Activated B cell treated with CpG ODN at 0.5 μM for 24 hours (primary cell): ENCODE measurements at regions of chr6 and their contacts with region 1.

Region 1: DNA sequence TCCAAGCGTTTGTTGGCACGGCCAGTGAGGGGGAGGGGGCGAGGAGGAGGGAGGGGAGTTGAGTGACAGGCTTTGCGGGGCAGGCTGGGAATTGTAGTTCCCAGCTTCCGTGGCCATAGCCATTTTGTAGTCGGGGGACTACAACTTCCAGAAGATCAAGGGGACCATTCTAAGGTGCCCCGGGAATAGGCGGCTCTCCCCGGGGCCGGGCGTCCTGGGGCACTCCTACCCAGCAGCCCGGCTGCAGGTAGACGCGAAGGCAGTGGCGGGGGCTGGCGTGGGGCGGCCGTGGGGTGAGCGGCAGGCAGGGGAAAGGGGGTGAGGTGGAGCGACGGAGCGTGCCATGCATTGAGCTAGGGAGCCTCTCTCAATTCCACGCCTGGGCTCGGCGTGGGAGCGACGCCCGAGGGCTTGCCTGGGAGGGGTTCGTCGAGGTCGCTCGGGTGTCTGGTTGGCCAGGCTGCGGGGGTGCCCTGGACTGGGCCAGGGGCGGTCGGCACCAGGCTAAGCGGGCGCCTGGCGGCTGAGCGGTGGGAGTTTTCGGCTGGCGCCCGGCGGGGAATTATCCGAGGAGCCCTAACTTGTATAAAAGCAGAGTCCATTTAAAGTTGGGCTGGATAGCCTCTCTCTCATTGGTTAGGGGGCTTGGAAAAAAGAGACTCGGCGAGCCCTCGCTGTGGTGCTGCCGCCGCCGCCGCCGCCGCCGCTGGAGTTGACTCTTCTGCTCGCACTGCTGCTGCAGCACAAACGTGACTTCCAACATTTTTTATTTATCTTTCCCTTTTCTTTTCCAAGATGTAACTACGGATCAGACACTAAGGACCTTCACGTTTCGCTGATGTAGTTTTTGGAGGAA is at the start of gene JARID2:
- DNase-seq: peak; percentile 94
- ATAC-seq: peak; percentile 61
- H3K4me3 Mint-ChIP-seq: peak within 1 kb of the TSS; percentile 100
- H3K27ac Mint-ChIP-seq: peak within 1 kb of the TSS; percentile 96
- H3K4me1 Mint-ChIP-seq: peaks cover 32% of the 10 kb centered on the region
- H3K27me3 Mint-ChIP-seq: no peaks in the 10 kb centered on the region
- CTCF ChIP-seq: no peak
- total RNA-seq, gene JARID2: 27.0 and 28.5 TPM in 2 replicates

Region 2: DNA sequence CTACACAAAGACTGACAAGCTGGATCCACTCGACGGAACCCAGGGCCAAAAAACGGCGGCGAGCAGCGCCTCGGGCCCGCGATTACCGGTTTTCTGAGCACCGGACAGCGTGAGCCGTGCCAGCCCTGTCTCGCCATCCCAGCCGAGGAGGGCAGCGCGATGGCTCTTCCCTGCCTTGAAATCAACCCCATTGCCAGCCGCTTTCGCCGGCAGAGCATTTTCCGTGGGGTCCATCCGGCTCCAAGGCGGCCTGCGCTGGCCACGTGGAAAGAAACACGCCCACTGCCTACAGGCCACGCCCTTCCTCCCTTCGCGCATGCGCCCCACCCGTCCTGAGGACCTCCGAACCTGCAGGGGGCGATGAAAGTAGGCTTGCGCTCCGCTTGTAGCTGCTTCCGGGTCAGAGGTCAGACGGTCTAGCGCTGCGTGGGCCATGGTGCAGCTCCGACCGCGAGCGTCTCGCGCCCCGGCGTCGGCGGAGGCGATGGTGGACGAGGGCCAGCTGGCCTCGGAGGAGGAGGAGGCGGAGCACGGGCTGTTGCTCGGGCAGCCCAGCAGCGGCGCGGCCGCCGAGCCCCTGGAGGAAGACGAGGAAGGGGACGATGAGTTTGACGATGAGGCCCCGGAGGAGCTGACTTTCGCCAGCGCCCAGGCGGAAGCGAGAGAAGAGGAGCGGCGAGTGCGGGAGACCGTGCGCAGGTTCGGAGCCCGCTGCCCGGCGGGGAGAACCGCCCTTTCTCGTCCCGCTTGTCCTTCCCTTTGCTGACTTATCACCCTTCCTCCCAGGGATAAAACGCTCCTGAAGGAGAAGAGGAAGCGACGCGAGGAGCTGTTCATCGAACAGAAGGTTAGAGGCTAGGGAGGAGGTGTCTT is 1630.4 kb before region 1 on chr6 and contains the start of gene NOL7:
- CTCF ChIA-PET with region 1: no interaction called
- POLR2A ChIA-PET with region 1: no interaction called
- intact Hi-C with region 1: loop called (anchors 5 kb)
- DNase-seq: peak; percentile 98
- ATAC-seq: peak; percentile 91
- H3K4me3 Mint-ChIP-seq: peak within 1 kb of the TSS; percentile 98
- H3K27ac Mint-ChIP-seq: peak within 1 kb of the TSS; percentile 94
- H3K4me1 Mint-ChIP-seq: peaks cover 43% of the 10 kb centered on the region
- H3K27me3 Mint-ChIP-seq: no peaks in the 10 kb centered on the region
- CTCF ChIP-seq: peak; percentile 30
- total RNA-seq, gene NOL7: 67.5 and 74.4 TPM in 2 replicates

Region 3: GRCh38 chr6:14095437-14095836 is 1150.2 kb before region 1 on chr6:
- CTCF ChIA-PET with region 1: no interaction called
- POLR2A ChIA-PET with region 1: no interaction called
- intact Hi-C with region 1: loop called (anchors 5 kb)
- DNase-seq: peak; percentile 72
- ATAC-seq: peak; percentile 73
- H3K4me3 Mint-ChIP-seq: peak overlapping the region; percentile 85
- H3K27ac Mint-ChIP-seq: peak overlapping the region; percentile 100
- H3K4me1 Mint-ChIP-seq: peaks cover 96% of the 10 kb centered on the region
- H3K27me3 Mint-ChIP-seq: no peaks in the 10 kb centered on the region
- CTCF ChIP-seq: no peak

Region 4: DNA sequence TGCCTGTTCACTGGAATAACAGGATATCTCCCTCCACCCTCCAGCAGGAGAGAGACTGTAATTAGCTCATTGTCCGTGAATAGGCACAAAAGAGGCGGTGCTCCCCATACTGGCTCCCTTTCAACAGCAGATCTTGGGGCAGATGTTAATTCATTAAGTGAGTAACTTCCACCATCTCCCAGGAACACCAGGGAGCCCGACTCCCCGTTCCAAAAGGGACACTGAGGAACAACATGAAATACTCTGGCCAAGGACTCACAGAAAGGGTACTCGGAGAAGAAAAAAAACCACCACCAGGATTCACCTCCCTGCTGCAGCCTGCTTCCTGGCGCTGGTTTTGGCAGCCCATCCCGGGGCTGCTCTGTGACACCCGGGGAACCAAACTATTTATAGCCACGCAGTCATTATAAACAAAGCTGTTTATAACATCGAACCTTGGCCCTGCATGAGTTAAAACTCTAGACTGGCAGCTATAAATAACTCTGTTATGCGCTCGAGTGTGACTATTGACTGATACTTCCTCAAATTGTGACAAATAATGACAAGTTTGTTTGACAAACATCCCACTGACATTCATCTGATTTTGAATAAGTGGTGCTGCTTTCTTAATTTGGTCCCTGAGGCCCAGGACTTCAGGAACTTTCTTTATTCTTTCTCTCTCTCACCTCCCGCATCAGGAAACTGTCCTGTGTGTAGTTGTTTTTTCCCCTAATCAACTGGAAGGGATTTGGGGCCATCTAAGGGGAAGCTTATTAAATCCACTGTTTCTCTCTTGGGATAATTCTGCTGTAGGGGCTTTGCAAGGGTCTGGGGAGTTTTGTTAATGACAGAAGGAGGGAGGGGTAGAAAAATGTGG is 606.5 kb before region 1 on chr6:
- CTCF ChIA-PET with region 1: no interaction called
- POLR2A ChIA-PET with region 1: no interaction called
- intact Hi-C with region 1: loop called (anchors 10 kb)
- DNase-seq: no peak
- ATAC-seq: peak; percentile 60
- H3K4me3 Mint-ChIP-seq: peak overlapping the region; percentile 86
- H3K27ac Mint-ChIP-seq: peak overlapping the region; percentile 96
- H3K4me1 Mint-ChIP-seq: peaks cover 82% of the 10 kb centered on the region
- H3K27me3 Mint-ChIP-seq: no peaks in the 10 kb centered on the region
- CTCF ChIP-seq: no peak

Region 5: DNA sequence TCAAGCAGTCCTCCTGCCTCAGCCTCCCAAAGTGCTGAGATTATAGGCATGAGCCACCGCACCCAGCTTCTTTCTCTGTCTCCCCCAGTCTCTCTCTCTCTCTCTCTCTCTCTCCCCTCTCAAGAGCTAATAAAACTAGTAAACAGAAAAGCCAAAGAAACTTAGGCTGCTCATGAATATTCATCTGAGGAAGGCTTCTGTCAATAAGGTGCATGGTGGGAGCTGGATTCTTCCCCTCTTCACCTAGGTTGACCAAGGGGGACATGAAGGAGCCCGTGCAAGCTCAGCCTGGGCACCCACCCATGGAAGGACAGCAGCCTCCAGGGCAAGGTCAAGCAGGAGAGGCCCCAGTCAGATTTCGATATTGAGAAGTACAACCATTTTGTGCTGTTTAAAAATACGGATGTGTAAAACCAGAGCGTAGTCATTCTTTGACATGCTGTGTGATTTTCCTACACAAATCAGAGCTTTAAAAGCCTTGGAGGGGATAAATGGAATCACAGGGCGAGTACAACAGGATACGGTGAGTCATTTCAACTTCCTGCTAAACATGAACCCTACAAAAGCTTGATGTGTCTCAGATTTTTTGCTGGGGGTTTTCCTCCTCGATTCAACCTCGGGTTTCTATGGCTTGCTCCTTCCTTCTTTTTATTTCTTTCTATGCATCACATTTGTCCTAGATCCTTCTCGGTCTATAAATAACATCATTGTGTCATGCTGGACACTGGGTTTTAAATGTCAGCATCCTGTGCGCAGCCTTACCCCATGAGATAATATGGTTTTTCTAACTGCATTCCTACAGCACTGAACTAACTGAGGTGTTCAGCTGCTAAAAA is 368.6 kb before region 1 on chr6:
- CTCF ChIA-PET with region 1: no interaction called
- POLR2A ChIA-PET with region 1: interaction called, 6 read pairs
- intact Hi-C with region 1: loop called (anchors 5 kb)
- DNase-seq: no peak
- ATAC-seq: peak; percentile 86
- H3K4me3 Mint-ChIP-seq: peak overlapping the region; percentile 53
- H3K27ac Mint-ChIP-seq: peak overlapping the region; percentile 82
- H3K4me1 Mint-ChIP-seq: peaks cover 42% of the 10 kb centered on the region
- H3K27me3 Mint-ChIP-seq: no peaks in the 10 kb centered on the region
- CTCF ChIP-seq: no peak

Region 6: DNA sequence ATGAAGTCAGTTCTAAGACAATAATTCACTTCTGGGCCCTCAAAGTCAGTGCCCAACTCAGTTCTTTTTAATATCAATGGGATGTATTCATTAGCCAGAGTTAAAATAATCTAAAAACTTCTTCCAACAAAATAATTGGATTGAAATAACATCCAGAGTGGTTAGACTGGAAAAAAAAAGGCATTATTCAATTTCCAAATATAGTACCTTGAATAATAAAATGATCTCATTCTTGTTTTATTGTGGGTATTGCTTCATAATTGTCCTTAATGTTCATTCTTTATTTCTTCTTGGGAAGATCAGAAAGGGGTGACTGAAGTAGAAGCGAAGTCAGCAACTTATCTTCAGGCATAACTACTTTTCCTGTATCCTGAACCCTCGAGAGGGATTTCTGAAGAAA is 84.8 kb before region 1 on chr6:
- CTCF ChIA-PET with region 1: no interaction called
- POLR2A ChIA-PET with region 1: no interaction called
- intact Hi-C with region 1: no loop called
- DNase-seq: no peak
- ATAC-seq: no peak
- H3K4me3 Mint-ChIP-seq: no peak overlapping the region
- H3K27ac Mint-ChIP-seq: no peak overlapping the region
- H3K4me1 Mint-ChIP-seq: no peaks in the 10 kb centered on the region
- H3K27me3 Mint-ChIP-seq: no peaks in the 10 kb centered on the region
- CTCF ChIP-seq: no peak

Region 7: DNA sequence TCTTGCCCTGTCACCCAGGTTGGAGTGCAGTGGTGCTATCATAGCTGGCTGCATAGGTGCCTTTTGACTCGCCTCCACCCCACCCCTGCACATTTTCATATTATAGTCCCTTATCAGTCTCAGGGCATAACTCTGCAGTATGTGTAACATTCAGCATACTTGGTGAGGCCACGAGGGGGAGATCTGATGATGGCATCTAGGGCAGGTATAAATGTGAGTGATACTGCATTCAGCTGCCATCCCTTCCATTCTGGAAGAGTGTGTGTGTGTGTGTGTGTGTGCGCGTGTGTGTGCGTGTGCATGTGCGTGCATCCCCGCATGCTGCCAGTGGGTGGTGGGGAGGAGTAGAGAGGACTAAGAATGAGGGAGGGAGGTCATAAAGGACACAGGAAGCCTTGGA is 81.7 kb after region 1 on chr6:
- CTCF ChIA-PET with region 1: no interaction called
- POLR2A ChIA-PET with region 1: interaction called, 21 read pairs
- intact Hi-C with region 1: loop called (anchors 1 kb)
- DNase-seq: no peak
- ATAC-seq: peak; percentile 74
- H3K4me3 Mint-ChIP-seq: peak overlapping the region; percentile 56
- H3K27ac Mint-ChIP-seq: peak overlapping the region; percentile 89
- H3K4me1 Mint-ChIP-seq: peaks cover 96% of the 10 kb centered on the region
- H3K27me3 Mint-ChIP-seq: no peaks in the 10 kb centered on the region
- CTCF ChIP-seq: no peak

Region 8: GRCh38 chr6:15662326-15663129 is 416.9 kb after region 1 on chr6 and contains the start of gene DTNBP1:
- CTCF ChIA-PET with region 1: no interaction called
- POLR2A ChIA-PET with region 1: no interaction called
- intact Hi-C with region 1: loop called (anchors 2 kb)
- DNase-seq: peak; percentile 94
- ATAC-seq: peak; percentile 73
- H3K4me3 Mint-ChIP-seq: peak within 1 kb of the TSS; percentile 87
- H3K27ac Mint-ChIP-seq: peak within 1 kb of the TSS; percentile 89
- H3K4me1 Mint-ChIP-seq: peaks cover 49% of the 10 kb centered on the region
- H3K27me3 Mint-ChIP-seq: no peaks in the 10 kb centered on the region
- CTCF ChIP-seq: no peak
- total RNA-seq, gene DTNBP1: 50.3 and 51.6 TPM in 2 replicates